ENCODE measurements at regions of chr19 and their contacts with region 1.

Region 1: DNA sequence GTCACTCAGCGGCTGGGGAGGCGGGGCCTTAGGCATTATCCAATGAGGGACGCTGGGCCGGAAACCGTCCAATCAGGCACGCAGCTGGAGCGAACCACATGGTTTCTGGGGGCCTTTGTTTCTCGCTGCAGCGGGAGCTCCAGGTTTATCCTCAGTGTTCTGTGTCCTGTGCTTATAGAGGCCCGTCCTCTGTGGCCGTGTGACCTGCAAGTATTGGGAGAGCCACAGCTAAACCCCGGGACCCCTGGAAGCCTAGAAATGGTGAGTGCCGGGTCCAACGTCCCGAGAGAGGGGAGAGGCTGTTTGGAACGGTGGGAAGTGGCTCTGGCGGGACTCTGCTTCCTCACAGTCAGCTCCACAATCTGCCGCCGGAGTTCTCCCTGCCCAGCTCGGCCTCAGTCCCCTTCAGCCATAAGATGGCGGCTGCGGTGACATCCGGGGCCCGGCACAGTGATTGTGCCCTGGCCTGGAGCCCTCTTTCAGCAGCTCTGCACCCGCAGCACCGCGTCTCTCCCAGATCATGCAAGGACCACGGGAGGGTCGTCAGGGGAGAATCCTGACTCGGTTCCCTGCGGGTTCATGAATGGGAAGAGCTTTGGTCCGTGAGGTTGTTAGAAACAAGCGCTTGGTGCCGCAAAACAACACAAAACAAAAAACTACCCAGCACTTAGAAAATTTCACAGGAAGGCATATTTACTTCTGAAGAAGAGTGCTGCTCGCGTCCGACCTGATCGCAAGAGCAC is at the start of gene ZNF253:
- DNase-seq: peak; percentile 98
- ATAC-seq: peak; percentile 99
- total RNA-seq, gene ZNF253: 11.3 TPM

Region 2: GRCh38 chr19:19385108-19385899 is 480.6 kb before region 1 on chr19:
- intact Hi-C with region 1: no loop called
- DNase-seq: peak; percentile 100
- ATAC-seq: peak; percentile 98

Region 3: DNA sequence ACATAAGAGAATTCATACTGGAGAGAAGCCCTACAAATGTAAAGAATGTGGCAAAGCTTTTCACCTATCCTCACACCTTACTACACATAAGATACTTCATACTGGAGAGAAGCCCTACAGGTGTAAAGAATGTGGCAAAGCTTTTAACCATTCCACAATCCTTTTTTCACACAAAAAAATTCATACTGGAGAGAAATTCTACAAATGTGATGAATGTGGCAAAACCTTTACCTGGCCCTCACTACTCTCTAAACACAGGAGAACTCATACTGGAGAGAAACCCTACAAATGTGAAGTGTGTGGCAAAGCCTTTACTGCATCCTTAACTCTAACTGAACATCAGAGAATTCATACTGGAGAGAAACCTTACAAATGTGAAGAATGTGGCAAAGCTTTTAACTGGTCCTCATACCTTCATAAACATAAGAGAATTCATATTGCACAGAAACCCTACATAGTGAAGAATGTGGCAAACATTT is 30.3 kb before region 1 on chr19:
- intact Hi-C with region 1: no loop called
- DNase-seq: no peak
- ATAC-seq: no peak

Region 4: DNA sequence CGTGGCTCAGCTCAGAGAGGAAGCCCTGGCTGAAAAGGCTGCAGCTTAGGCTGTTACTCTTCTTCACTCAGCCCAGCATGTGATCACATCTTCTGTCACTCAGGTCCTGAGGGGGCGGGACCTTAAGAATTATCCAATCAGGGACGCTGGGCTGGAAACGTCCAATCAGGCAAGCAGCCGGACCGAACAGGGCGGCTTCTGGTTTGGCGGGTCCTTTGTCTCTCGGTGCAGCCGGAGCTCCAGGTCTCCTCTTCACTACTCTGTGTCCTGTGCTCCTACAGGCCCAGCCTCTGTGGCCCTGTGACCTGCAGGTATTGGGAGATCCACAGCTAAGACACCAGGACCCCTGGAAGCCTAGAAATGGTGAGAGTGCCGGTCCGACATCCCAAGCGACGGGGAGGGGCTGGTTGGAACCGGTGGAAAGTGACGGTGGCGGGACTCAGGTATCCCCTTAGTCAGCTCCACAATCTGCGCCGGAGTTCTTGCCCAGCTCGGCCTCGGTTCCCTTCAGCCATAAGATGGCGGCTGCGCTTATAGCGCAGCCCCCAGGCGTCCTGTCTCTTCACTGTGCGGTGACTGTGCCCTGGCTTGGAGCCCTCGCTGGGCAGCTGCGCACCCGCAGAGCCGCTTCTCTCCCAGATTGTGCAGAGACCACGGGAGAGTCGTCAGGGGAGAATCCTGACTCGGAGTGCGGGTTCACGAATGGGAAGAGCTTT is 35.0 kb after region 1 on chr19 and contains the start of gene ZNF93:
- intact Hi-C with region 1: loop called (anchors 5 kb)
- DNase-seq: peak; percentile 94
- ATAC-seq: peak; percentile 100
- total RNA-seq, gene ZNF93: 1.7 TPM

Region 5: GRCh38 chr19:20186174-20186573 is 320.3 kb after region 1 on chr19:
- intact Hi-C with region 1: no loop called
- DNase-seq: no peak
- ATAC-seq: no peak